ENCODE measurements at regions of chr22 and their contacts with region 1.

Region 1: GRCh38 chr22:45645526-45646414 is 25.9 kb upstream of the ATXN10 start:
- DNase-seq: peak; percentile 61
- H3K4me3 Mint-ChIP-seq: no peak overlapping the region
- H3K27ac Mint-ChIP-seq: no peak overlapping the region
- H3K4me1 Mint-ChIP-seq: no peaks in the 10 kb centered on the region
- H3K27me3 Mint-ChIP-seq: peaks cover 13% of the 10 kb centered on the region
- CTCF ChIP-seq: peak; percentile 98

Region 2: DNA sequence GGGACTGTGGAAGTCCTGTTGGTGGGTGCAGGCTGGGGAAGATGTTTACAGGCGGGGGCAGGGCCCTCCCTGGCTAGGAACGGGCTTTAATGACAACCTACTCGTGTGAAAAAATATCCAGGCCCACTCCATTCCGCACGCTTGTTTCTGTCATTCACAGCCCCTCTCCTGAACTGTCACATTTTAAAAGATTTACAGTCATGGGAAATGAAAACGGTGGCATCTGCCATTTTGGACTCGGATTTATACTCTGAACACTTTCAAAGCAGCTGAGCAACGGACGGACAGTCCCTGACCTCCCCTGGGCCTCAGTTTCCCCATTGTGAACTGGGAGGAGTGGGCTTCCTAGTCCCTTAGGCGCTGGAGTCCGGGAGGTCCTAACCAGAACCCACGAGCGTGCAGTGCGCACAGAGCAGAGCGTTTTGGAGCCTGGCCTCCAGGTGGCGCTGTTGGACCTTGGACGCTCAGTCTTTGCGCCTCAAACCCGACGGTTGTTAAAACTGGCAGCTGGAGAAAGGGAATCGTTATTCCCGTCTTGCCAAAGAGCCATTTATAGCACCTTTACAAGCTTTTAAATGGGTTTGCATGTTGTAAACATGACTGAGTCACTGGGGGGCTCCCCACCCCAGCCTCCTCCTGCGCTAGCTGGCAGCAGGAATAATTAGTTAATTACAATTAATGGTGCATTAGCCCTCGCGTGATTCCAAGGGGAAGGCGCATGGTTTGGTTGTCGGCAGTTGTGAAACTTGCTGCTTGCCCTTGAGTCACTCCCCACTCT is 67.8 kb before region 1 on chr22:
- CTCF ChIA-PET with region 1: interaction called, 19 read pairs
- POLR2A ChIA-PET with region 1: no interaction called
- intact Hi-C with region 1: loop called (anchors 2 kb)
- DNase-seq: peak; percentile 80
- H3K4me3 Mint-ChIP-seq: no peak overlapping the region
- H3K27ac Mint-ChIP-seq: no peak overlapping the region
- H3K4me1 Mint-ChIP-seq: no peaks in the 10 kb centered on the region
- H3K27me3 Mint-ChIP-seq: no peaks in the 10 kb centered on the region
- CTCF ChIP-seq: peak; percentile 95

Region 3: DNA sequence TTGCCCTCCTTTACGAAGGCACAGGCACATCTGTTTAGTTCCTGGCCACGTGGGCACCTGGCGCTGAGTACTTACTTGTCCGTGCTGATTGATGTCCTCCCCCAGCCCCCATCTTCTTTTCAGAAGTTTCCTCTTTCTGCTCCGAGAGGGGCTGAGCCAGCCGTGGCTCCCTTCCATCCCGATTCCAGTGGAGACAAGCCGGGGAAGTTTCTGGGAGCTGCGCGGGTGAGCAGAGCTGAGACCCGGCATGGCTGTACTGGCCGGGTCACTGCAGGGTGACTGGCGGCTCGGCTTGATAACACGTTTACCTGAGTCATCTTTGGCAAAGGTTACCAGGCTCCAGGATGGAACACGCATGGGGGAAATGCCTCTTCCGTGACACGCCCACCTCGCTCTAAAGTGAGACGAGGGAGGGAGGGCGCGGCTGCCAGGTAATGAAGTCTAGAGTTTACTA is 19.5 kb before region 1 on chr22:
- CTCF ChIA-PET with region 1: interaction called, 10 read pairs
- POLR2A ChIA-PET with region 1: no interaction called
- intact Hi-C with region 1: no loop called
- DNase-seq: peak; percentile 92
- H3K4me3 Mint-ChIP-seq: peak overlapping the region; percentile 55
- H3K27ac Mint-ChIP-seq: peak overlapping the region; percentile 46
- H3K4me1 Mint-ChIP-seq: peaks cover 13% of the 10 kb centered on the region
- H3K27me3 Mint-ChIP-seq: peaks cover 7% of the 10 kb centered on the region
- CTCF ChIP-seq: no peak

Region 4: GRCh38 chr22:45656577-45656976 is 10.8 kb after region 1 on chr22:
- CTCF ChIA-PET with region 1: interaction called, 12 read pairs
- POLR2A ChIA-PET with region 1: interaction called, 3 read pairs
- intact Hi-C with region 1: no loop called
- DNase-seq: no peak
- H3K4me3 Mint-ChIP-seq: no peak overlapping the region
- H3K27ac Mint-ChIP-seq: no peak overlapping the region
- H3K4me1 Mint-ChIP-seq: no peaks in the 10 kb centered on the region
- H3K27me3 Mint-ChIP-seq: no peaks in the 10 kb centered on the region
- CTCF ChIP-seq: no peak

Region 5: GRCh38 chr22:45673482-45674175 is 27.9 kb after region 1 on chr22:
- CTCF ChIA-PET with region 1: no interaction called
- POLR2A ChIA-PET with region 1: no interaction called
- intact Hi-C with region 1: no loop called
- DNase-seq: no peak
- H3K4me3 Mint-ChIP-seq: peak overlapping the region; percentile 88
- H3K27ac Mint-ChIP-seq: peak overlapping the region; percentile 93
- H3K4me1 Mint-ChIP-seq: peaks cover 34% of the 10 kb centered on the region
- H3K27me3 Mint-ChIP-seq: no peaks in the 10 kb centered on the region
- CTCF ChIP-seq: no peak

Region 6: DNA sequence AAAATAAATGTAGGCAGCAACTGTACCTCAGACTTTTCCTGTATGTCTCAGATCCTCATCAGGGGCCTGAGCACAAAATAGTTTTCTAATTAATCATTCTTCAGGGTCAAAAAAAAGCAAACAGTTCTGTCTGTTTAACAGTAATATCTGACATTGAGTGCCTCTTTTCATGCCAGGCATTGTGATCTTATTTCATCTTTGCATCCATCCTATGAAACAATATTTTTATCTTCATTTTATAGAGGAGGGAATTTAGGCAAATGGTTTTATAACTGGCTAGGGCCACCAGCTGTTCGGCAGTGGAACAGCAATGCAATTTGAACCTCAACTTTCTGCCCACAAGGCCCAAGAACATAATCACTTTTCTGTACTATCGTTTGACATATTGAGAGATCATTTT is 185.6 kb after region 1 on chr22:
- CTCF ChIA-PET with region 1: interaction called, 4 read pairs
- POLR2A ChIA-PET with region 1: no interaction called
- intact Hi-C with region 1: loop called (anchors 5 kb)
- DNase-seq: peak; percentile 11
- H3K4me3 Mint-ChIP-seq: no peak overlapping the region
- H3K27ac Mint-ChIP-seq: peak overlapping the region; percentile 84
- H3K4me1 Mint-ChIP-seq: peaks cover 23% of the 10 kb centered on the region
- H3K27me3 Mint-ChIP-seq: no peaks in the 10 kb centered on the region
- CTCF ChIP-seq: peak; percentile 19

Measured in MCF 10A (cell line).